Right cardiac atrium (tissue), 5 donors: ENCODE measurements at regions of chr2 and their contacts with region 1.

Region 1: GRCh38 chr2:216519154-216519762 is 20.6 kb downstream of the RPL37A start:
- DNase-seq: peak in 1 of 3 donors; percentile 31
- ATAC-seq: peak; percentile 70 to 74
- H3K4me3 ChIP-seq: no peak overlapping the region
- H3K27ac ChIP-seq: no peak overlapping the region
- H3K4me1 ChIP-seq: no peaks in the 10 kb centered on the region
- H3K27me3 ChIP-seq: no peaks in the 10 kb centered on the region

Region 2: GRCh38 chr2:216666461-216667233 is 147.4 kb after region 1 on chr2:
- intact Hi-C with region 1: loop called (anchors 1 to 2 kb)
- DNase-seq: peak in 2 of 3 donors; percentile 83 to 85
- ATAC-seq: peak; percentile 34 to 59
- H3K4me3 ChIP-seq: no peak overlapping the region
- H3K27ac ChIP-seq: no peak overlapping the region
- H3K4me1 ChIP-seq: no peaks in the 10 kb centered on the region
- H3K27me3 ChIP-seq: no peaks in the 10 kb centered on the region

Region 3: GRCh38 chr2:216838151-216838550 is 318.9 kb after region 1 on chr2:
- intact Hi-C with region 1: no loop called
- DNase-seq: peak; percentile 18 to 79 (median 57)
- ATAC-seq: peak; percentile 62 to 66
- H3K4me3 ChIP-seq: no peak overlapping the region
- H3K27ac ChIP-seq: no peak overlapping the region
- H3K4me1 ChIP-seq: no peaks in the 10 kb centered on the region
- H3K27me3 ChIP-seq: no peaks in the 10 kb centered on the region

Region 4: DNA sequence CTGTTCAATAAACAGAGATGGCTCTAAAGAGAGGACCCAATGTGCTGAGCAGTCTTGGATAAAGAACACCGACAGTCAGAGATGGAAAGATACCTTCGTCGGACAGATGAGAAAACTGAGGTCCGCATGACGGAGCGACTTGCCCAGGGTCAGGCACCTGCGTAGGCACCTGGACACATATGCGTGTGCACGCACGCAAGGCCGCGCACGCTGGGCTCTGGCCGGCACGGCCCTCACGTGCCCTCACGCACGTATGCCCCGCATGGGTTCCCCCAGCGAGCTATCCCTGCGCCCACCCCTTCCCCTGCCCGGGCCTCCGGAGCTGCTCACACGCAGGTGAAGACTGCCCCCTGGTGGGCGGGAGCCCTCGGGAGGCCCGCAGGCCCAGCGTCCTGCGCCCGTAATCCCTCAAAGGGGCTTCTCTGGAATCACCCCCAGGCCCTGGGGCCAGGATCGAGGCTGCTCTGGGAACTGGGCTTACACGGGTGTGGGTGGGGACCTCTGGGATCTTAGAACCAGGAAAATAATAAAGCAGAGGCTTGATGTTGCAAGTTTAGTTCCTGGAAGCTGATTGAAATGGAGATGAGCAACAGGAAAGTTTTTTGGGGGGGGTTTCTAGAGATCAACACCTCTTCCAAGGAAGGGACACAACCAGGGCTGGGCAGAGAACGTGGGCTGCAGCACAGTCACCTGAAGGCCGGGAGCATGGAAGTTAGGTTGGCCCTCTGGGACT is 1237.3 kb after region 1 on chr2:
- intact Hi-C with region 1: loop called in 1 of 4 experiments (anchors 10 kb)
- DNase-seq: peak; percentile 80 to 92 (median 92)
- ATAC-seq: peak; percentile 85 to 90
- H3K4me3 ChIP-seq: peak overlapping the region; percentile 16
- H3K27ac ChIP-seq: no peak overlapping the region
- H3K4me1 ChIP-seq: peaks cover 5% of the 10 kb centered on the region
- H3K27me3 ChIP-seq: no peaks in the 10 kb centered on the region